A673 (cell line): ENCODE measurements at regions of chr2 and their contacts with region 1.

Region 1: GRCh38 chr2:68251187-68251854 is 1.0 kb downstream of the PPP3R1 start:
- DNase-seq: peak; percentile 89
- H3K4me3 ChIP-seq: peak overlapping the region; percentile 68
- H3K27ac ChIP-seq: peak overlapping the region; percentile 79
- H3K4me1 ChIP-seq: peaks cover 30% of the 10 kb centered on the region
- H3K27me3 ChIP-seq: no peaks in the 10 kb centered on the region
- CTCF ChIP-seq: peak; percentile 75

Region 2: GRCh38 chr2:66633631-66634030 is 1617.7 kb before region 1 on chr2:
- CTCF ChIA-PET with region 1: no interaction called
- POLR2A ChIA-PET with region 1: no interaction called
- intact Hi-C with region 1: no loop called
- DNase-seq: no peak
- H3K4me3 ChIP-seq: no peak overlapping the region
- H3K27ac ChIP-seq: no peak overlapping the region
- H3K4me1 ChIP-seq: no peaks in the 10 kb centered on the region
- H3K27me3 ChIP-seq: no peaks in the 10 kb centered on the region
- CTCF ChIP-seq: no peak

Region 3: DNA sequence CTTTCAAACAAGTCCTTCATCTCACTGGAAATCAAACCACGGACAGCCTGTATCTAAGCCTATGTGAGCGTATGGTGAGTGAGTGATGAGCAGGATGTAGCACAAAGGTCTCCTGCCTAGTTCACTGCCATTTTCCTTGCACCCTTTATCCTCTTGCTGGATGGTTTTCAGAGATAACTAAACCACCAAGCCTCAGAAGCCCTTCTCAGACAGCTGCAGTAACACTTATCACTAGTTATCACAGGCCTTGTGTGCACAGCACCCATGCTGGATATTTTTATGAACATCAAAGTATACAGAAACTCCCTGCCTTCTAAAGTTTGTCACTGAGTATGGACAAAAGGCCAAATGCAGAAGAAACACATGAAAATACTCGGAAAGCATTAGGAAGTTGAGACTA is 258.0 kb before region 1 on chr2:
- CTCF ChIA-PET with region 1: no interaction called
- POLR2A ChIA-PET with region 1: no interaction called
- intact Hi-C with region 1: no loop called
- DNase-seq: no peak
- H3K4me3 ChIP-seq: no peak overlapping the region
- H3K27ac ChIP-seq: no peak overlapping the region
- H3K4me1 ChIP-seq: no peaks in the 10 kb centered on the region
- H3K27me3 ChIP-seq: no peaks in the 10 kb centered on the region
- CTCF ChIP-seq: no peak

Region 4: DNA sequence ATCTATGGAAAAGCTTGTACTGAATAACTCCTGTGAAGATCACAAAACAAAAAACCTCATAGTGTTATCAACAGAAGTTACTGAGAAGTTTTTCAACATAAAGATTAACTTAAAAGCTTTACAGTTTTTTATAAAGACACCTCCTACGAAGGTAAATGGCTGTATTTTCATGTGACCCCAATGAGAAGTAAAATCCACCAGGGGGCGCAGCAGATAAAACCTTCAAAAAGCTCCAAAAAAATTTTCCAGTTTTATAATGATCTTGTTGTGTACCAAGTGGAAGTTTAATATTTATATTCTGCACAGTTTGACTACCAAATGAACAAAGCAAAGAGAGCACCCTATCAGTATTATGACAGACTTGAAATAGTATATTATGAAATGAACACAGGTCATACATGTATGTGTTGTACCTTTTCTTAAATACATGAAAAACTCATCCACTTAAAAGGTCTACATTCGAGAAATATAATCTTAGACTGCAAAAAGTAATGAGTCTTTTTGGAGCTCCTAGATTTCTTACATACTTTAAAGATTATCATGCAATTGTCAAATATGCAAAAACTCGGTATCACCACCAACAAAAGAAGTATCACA is 55.1 kb before region 1 on chr2:
- CTCF ChIA-PET with region 1: interaction called, 3 read pairs
- POLR2A ChIA-PET with region 1: no interaction called
- intact Hi-C with region 1: loop called (anchors 5 kb)
- DNase-seq: peak; percentile 75
- H3K4me3 ChIP-seq: no peak overlapping the region
- H3K27ac ChIP-seq: no peak overlapping the region
- H3K4me1 ChIP-seq: peaks cover 21% of the 10 kb centered on the region
- H3K27me3 ChIP-seq: no peaks in the 10 kb centered on the region
- CTCF ChIP-seq: peak; percentile 88

Region 5: GRCh38 chr2:70160545-70160944 is 1909.2 kb after region 1 on chr2:
- CTCF ChIA-PET with region 1: no interaction called
- POLR2A ChIA-PET with region 1: interaction called, 19 read pairs
- intact Hi-C with region 1: no loop called
- DNase-seq: no peak
- H3K4me3 ChIP-seq: no peak overlapping the region
- H3K27ac ChIP-seq: no peak overlapping the region
- H3K4me1 ChIP-seq: no peaks in the 10 kb centered on the region
- H3K27me3 ChIP-seq: no peaks in the 10 kb centered on the region
- CTCF ChIP-seq: no peak